Tibial artery (tissue), 4 donors: ENCODE measurements at regions of chr9 and their contacts with region 1.

Region 1: GRCh38 chr9:19456996-19457692 is 48.3 kb downstream of the ACER2 start:
- DNase-seq: peak; percentile 64 to 76
- H3K4me3 ChIP-seq: no peak overlapping the region
- H3K27ac ChIP-seq: peak overlapping the region; percentile 41 to 51
- H3K4me1 ChIP-seq: peaks cover 0 to 14% (median 8%) of the 10 kb centered on the region in 4 donors
- H3K27me3 ChIP-seq: no peaks in the 10 kb centered on the region
- CTCF ChIP-seq: peak; percentile 96 to 97

Region 2: DNA sequence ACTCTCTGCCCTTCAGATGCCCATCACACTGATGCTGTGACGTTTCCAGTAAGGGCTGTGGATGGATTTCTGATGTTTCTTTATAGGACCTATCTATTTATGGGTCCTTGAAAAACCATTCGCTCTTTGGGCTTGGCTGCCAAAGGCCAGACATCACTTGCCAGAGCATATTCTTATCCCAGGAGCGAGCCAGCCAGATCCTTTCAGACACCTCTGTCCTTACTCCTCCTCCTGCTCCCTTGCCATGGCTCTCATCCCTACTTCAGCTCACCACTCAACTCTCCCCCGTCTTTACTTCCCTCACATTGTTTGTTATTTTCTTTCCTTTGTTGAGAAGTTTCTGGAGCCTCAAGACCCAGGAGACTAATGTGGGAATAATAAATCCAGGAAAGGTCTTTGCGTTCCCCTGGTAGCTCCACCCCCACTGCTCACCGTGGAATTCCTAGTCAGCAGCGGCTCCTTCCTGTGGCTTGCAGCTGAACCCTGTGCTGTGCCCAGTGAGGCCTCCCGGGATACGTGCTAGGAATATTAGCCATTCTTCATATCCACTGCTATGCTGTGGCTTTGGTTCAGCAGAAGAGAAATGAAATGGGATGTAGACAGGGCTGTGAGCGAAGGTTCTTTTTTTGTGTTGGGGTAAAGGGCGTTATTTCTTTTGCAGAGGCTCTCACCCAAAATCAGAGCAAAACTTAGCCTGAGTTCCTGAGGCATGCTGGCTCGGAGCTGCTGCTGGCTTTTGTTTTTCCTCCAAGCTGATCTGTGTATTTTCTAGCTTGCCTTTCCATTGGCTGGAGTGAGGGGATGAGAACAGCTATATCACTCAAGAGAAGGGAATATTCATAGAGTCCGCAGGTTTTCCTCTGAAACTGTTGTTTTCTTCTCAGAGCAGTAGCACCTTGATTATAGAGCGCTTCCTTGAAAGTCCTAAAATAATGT is 595.3 kb before region 1 on chr9:
- intact Hi-C with region 1: loop called (anchors 10 kb)
- DNase-seq: peak; percentile 75 to 84
- H3K4me3 ChIP-seq: peak overlapping the region; percentile 13 to 36
- H3K27ac ChIP-seq: peak overlapping the region; percentile 68 to 71
- H3K4me1 ChIP-seq: peaks cover 0 to 35% (median 20%) of the 10 kb centered on the region in 4 donors
- H3K27me3 ChIP-seq: no peaks in the 10 kb centered on the region
- CTCF ChIP-seq: no peak

Region 3: DNA sequence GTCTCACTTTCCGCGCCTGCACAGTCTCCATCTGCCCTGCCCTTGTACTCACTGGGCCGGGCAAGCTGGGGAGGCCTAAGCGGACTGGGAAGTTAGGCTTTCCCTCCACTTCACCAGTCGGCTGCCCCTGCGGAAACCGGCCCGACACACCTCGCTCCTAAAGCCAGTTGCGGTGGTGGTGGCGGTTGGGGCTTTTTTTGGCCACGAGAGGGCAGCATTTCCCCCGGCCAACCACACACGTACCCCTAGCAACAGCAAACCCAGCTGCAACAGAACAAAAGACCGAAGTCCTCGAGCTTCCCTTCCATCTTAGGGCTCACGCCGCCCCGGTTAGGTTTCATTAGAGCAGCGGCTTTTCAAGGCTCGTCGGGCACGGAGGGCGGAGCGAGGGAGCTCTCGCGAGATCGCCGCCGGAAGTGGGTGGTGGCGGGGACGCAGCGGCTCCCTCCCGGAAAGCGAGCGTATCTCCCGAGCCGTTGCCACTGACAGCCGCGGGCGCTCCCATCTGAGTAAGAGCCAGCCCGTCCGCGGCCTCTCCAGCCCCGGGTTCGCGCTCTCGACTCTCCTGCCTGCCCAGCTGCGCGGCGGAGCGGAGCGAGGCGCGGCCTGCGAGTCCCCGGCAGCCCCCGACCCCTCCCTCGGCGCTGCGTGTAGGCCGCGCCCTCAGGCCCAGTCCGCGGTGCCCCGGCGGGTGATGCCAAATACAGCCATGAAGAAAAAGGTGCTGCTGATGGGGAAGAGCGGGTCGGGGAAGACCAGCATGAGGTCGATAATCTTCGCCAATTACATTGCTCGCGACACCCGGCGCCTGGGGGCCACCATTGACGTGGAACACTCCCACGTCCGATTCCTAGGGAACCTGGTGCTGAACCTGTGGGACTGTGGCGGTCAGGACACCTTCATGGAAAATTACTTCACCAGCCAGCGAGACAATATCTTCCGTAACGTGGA is 407.9 kb before region 1 on chr9 and contains the start of gene RRAGA:
- intact Hi-C with region 1: loop called (anchors 10 kb)
- DNase-seq: peak; percentile 91 to 96
- H3K4me3 ChIP-seq: peak within 1 kb of the TSS; percentile 79 to 82
- H3K27ac ChIP-seq: peak within 1 kb of the TSS; percentile 96 to 97
- H3K4me1 ChIP-seq: peaks cover 5 to 39% (median 16%) of the 10 kb centered on the region in 4 donors
- H3K27me3 ChIP-seq: no peaks in the 10 kb centered on the region
- CTCF ChIP-seq: peak; percentile 84 to 93

Region 4: DNA sequence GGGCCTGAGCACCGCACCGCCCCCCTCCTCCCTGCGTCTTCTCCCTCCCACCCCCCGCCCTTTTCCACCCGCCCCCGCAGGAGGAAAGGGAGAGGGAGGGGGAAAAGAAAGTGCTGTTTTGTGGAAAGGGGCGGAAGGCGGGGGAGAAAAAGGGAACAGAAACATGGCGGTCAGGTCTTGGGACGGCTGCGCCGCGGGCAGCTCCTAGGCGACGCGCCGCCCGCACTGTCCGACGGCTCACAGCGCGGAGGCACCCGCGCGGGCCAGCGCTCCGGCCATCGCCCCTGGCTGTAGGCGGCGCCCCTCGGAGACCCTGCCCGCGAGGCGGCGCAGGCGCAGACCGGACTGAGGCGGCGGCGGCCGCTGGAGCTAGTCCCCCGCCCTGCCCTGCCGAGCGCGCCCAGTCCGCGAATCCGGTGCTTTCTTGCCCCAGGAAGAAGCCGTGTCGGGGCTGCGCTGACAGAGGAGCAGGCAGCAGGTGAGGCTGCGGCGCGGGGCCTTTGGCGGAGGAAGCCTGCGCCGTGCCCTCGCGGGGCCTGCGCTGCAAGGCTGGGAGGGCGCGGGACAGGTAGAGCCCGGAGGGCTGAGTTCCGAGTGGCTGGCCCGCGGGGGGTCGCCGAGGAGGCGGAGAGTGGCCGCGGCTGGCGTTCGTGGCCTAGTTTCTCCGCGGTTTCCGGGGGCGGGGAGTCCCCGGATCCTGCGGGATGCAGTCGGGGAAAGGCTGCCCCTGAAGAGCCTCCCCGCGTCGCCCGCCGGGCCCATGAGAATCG is 226.6 kb before region 1 on chr9 and contains the start of gene DENND4C:
- intact Hi-C with region 1: loop called (anchors 10 kb)
- DNase-seq: peak; percentile 83 to 91
- H3K4me3 ChIP-seq: peak within 1 kb of the TSS; percentile 65 to 94
- H3K27ac ChIP-seq: peak within 1 kb of the TSS; percentile 94 to 95
- H3K4me1 ChIP-seq: peaks cover 0 to 30% (median 7%) of the 10 kb centered on the region in 4 donors
- H3K27me3 ChIP-seq: no peaks in the 10 kb centered on the region
- CTCF ChIP-seq: no peak

Region 5: DNA sequence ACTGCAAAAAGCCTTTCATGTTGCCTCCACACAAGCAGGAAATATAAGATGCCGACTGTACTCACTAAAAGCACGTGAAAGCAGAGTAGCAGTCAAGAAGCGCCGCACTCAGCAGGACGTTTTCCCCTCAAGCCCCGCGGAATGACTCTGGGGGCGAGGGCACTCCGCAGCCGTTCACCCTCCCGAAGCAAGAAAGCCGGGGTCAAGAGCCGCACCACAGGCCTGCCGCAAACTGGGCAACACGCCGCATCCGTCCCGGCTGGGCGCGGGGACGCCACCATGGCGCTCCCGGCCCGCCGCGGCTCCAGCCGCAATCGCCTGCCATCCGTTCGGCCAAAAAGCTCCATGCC is 77.5 kb before region 1 on chr9:
- intact Hi-C with region 1: loop called (anchors 2 kb)
- DNase-seq: peak; percentile 26 to 75
- H3K4me3 ChIP-seq: peak overlapping the region; percentile 61 to 82
- H3K27ac ChIP-seq: peak overlapping the region; percentile 92 to 93
- H3K4me1 ChIP-seq: peaks cover 0 to 28% (median 17%) of the 10 kb centered on the region in 4 donors
- H3K27me3 ChIP-seq: no peaks in the 10 kb centered on the region
- CTCF ChIP-seq: no peak

Region 6: GRCh38 chr9:19699756-19700155 is 242.6 kb after region 1 on chr9:
- intact Hi-C with region 1: no loop called
- DNase-seq: no peak
- H3K4me3 ChIP-seq: no peak overlapping the region
- H3K27ac ChIP-seq: no peak overlapping the region
- H3K4me1 ChIP-seq: no peaks in the 10 kb centered on the region
- H3K27me3 ChIP-seq: no peaks in the 10 kb centered on the region
- CTCF ChIP-seq: no peak